ENCODE measurements at regions of chr1 and their contacts with region 1.

Region 1: DNA sequence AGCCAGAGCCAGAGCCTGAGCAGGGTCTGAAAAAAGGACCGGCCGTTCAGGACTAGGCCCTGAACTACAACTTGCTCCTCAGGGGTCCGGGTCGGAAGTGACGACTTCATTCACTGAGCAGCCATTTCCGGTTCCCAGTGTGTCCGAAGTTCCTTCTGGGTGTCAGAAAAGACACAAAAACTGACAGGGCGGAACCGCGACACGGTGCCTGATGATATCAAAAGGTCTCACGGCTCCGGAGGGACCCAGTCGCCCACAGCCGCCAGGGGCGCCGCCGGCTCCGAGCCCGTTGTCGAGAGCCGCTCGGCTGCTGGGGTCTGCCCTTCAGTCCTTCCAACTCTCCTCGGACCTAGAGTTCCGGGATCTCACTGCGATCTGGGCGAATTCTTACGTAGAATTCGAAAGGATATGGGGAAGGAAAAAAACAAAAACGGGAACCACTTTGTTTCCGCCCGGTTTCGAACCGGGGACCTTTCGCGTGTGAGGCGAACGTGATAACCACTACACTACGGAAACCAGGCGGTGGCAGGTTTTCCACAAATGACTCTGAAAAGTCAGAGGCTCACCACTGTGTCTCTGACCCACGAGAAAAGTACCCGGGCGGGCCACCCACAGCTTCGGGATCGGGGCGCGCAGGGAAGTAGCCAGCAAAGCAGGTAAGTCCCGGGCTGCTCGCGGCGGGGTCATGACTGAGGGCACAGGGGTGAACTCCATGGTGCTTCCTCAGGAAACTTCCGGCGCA is 31.8 kb upstream of the CFAP126 start:
- DNase-seq: peak; percentile 93
- ATAC-seq: peak; percentile 93

Region 2: GRCh38 chr1:161440312-161440894 is 41.0 kb after region 1 on chr1:
- intact Hi-C with region 1: loop called (anchors 10 kb)
- DNase-seq: peak; percentile 83
- ATAC-seq: no peak

Region 3: DNA sequence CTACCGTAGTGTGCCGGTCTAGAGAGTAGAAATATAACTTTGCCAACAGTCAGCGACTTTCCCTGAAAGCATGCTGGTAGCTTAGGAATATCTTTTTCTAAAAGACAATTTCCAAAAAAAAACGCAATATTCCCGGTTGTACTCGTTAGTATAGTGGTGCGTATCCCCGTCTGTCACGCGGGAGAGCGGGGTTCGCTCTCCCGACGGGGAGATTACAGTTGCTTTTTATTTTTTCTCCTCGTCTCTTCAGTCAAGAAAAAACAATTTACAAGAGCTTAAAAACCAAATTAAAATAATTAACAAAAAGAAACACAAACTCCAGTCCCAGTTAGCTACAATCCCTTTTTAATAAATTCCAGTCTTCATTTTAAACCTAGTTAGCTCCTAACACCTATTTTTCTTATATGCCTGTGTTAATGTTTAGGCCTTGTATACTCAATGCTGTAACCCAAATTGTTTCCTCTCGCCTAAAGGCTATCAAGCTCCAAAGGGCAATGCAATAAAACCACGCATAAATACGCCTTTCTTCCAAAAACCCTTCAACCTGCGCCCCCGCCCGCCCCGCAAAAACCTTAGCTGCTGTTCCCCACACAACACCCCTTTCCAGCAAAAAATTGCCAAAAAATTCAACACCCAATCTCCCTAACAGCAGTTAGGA is 132.7 kb after region 1 on chr1:
- intact Hi-C with region 1: loop called (anchors 10 kb)
- DNase-seq: no peak
- ATAC-seq: no peak